Caco-2 (cell line): ENCODE measurements at regions of chr14 and their contacts with region 1.

Region 1: GRCh38 chr14:35404449-35405303 is at the start of gene NFKBIA:
- DNase-seq: peak; percentile 87 to 94
- H3K4me3 ChIP-seq: peak within 1 kb of the TSS; percentile 97
- H3K4me3 Mint-ChIP-seq: peak within 1 kb of the TSS; percentile 86
- H3K27ac Mint-ChIP-seq: peak within 1 kb of the TSS; percentile 95
- H3K4me1 ChIP-seq: peaks cover 22% of the 10 kb centered on the region
- H3K4me1 Mint-ChIP-seq: peaks cover 9% of the 10 kb centered on the region
- H3K27me3 ChIP-seq: no peaks in the 10 kb centered on the region; the same call in 1 of the 2 replicates
- H3K27me3 Mint-ChIP-seq: no peaks in the 10 kb centered on the region
- CTCF ChIP-seq: peak; percentile 19 to 34
- total RNA-seq, gene NFKBIA: 33.4 and 39.9 TPM in 2 replicates

Region 2: GRCh38 chr14:35121887-35122695 is 282.6 kb before region 1 on chr14 and contains the starts of genes PPP2R3C and PRORP:
- CTCF ChIA-PET with region 1: no interaction called
- POLR2A ChIA-PET with region 1: interaction called, 10 read pairs
- intact Hi-C with region 1: loop called (anchors 10 kb)
- DNase-seq: peak; percentile 95 to 97
- H3K4me3 ChIP-seq: peak within 1 kb of the TSS; percentile 70
- H3K4me3 Mint-ChIP-seq: peak within 1 kb of the TSS; percentile 88
- H3K27ac Mint-ChIP-seq: peak within 1 kb of the TSS; percentile 100
- H3K4me1 ChIP-seq: no peaks in the 10 kb centered on the region
- H3K4me1 Mint-ChIP-seq: peaks cover 38% of the 10 kb centered on the region
- H3K27me3 ChIP-seq: no peaks in the 10 kb centered on the region
- H3K27me3 Mint-ChIP-seq: no peaks in the 10 kb centered on the region
- CTCF ChIP-seq: no peak
- total RNA-seq, gene PPP2R3C: 23.3 and 25.2 TPM in 2 replicates
- total RNA-seq, gene PRORP: 34.5 and 36.3 TPM in 2 replicates

Region 3: DNA sequence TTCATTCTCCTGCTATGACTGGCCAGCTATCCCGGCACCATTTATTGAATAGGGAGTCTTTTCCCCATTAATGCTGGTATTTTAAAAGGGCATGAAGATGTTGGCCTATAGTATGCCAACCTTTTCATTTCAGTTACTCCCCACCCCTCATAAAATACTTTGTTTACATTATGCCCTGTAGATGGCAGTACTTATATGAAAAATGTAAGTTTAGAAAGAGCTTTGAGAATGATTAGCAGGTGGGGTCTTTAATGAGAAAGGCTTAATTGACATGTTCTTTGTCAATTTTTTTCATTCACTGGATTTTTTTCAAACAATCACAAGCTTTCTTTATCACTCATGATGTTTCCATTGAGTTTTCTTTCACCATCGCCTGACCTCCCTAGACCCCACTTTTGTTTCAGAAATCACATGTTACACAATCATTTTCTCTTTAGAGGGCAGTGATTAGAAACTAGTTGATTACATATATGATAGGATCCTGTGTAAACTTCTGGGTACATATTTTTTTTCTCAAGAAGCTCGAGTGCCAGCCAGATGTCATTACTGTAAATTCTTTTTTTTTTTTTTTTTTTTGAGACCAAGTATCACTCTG is 175.1 kb before region 1 on chr14:
- CTCF ChIA-PET with region 1: interaction called, 8 read pairs
- POLR2A ChIA-PET with region 1: no interaction called
- intact Hi-C with region 1: loop called (anchors 1 kb)
- DNase-seq: no peak
- H3K4me3 ChIP-seq: no peak overlapping the region
- H3K4me3 Mint-ChIP-seq: no peak overlapping the region
- H3K27ac Mint-ChIP-seq: no peak overlapping the region
- H3K4me1 ChIP-seq: no peaks in the 10 kb centered on the region
- H3K4me1 Mint-ChIP-seq: no peaks in the 10 kb centered on the region
- H3K27me3 ChIP-seq: no peaks in the 10 kb centered on the region
- H3K27me3 Mint-ChIP-seq: no peaks in the 10 kb centered on the region
- CTCF ChIP-seq: peak; percentile 11 to 32

Region 4: GRCh38 chr14:35320472-35320871 is 84.2 kb before region 1 on chr14:
- CTCF ChIA-PET with region 1: no interaction called
- POLR2A ChIA-PET with region 1: no interaction called
- intact Hi-C with region 1: no loop called
- DNase-seq: no peak
- H3K4me3 ChIP-seq: no peak overlapping the region
- H3K4me3 Mint-ChIP-seq: no peak overlapping the region
- H3K27ac Mint-ChIP-seq: no peak overlapping the region
- H3K4me1 ChIP-seq: no peaks in the 10 kb centered on the region
- H3K4me1 Mint-ChIP-seq: no peaks in the 10 kb centered on the region
- H3K27me3 ChIP-seq: no peaks in the 10 kb centered on the region
- H3K27me3 Mint-ChIP-seq: no peaks in the 10 kb centered on the region
- CTCF ChIP-seq: no peak

Region 5: GRCh38 chr14:35331605-35332516 is 72.8 kb before region 1 on chr14:
- CTCF ChIA-PET with region 1: interaction called, 3 read pairs
- POLR2A ChIA-PET with region 1: interaction called, 6 read pairs
- intact Hi-C with region 1: loop called (anchors 1 kb)
- DNase-seq: peak; percentile 82 to 83
- H3K4me3 ChIP-seq: no peak overlapping the region
- H3K4me3 Mint-ChIP-seq: peak overlapping the region; percentile 52
- H3K27ac Mint-ChIP-seq: peak overlapping the region; percentile 90
- H3K4me1 ChIP-seq: peaks cover 45% of the 10 kb centered on the region
- H3K4me1 Mint-ChIP-seq: peaks cover 26% of the 10 kb centered on the region
- H3K27me3 ChIP-seq: no peaks in the 10 kb centered on the region
- H3K27me3 Mint-ChIP-seq: no peaks in the 10 kb centered on the region
- CTCF ChIP-seq: no peak

Region 6: DNA sequence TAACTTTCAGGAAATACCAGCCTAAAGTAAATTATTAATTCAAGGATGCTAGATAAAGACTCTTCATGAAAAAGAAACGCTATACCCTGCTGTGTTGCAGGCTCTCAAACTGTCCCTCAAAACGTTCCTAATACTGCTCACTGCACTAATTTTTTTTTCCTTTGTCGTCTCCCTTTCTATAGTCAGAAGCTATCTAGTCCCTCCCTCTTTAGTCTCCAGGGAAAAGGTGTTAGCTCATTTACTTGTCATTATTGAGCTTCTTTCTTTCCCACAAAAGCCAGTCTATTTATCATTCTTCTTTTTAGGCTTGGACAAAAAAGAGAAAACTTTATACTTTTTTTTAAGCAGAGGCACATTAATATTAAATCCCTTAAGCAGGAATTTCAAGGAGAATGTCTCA is 99.0 kb after region 1 on chr14:
- CTCF ChIA-PET with region 1: no interaction called
- POLR2A ChIA-PET with region 1: no interaction called
- intact Hi-C with region 1: no loop called
- DNase-seq: no peak
- H3K4me3 ChIP-seq: no peak overlapping the region
- H3K4me3 Mint-ChIP-seq: peak overlapping the region; percentile 58
- H3K27ac Mint-ChIP-seq: no peak overlapping the region
- H3K4me1 ChIP-seq: peaks cover 21% of the 10 kb centered on the region
- H3K4me1 Mint-ChIP-seq: peaks cover 9% of the 10 kb centered on the region
- H3K27me3 ChIP-seq: no peaks in the 10 kb centered on the region
- H3K27me3 Mint-ChIP-seq: no peaks in the 10 kb centered on the region
- CTCF ChIP-seq: no peak